Mammary epithelial cell (primary cell): ENCODE measurements at regions of chr15 and their contacts with region 1.

Region 1: DNA sequence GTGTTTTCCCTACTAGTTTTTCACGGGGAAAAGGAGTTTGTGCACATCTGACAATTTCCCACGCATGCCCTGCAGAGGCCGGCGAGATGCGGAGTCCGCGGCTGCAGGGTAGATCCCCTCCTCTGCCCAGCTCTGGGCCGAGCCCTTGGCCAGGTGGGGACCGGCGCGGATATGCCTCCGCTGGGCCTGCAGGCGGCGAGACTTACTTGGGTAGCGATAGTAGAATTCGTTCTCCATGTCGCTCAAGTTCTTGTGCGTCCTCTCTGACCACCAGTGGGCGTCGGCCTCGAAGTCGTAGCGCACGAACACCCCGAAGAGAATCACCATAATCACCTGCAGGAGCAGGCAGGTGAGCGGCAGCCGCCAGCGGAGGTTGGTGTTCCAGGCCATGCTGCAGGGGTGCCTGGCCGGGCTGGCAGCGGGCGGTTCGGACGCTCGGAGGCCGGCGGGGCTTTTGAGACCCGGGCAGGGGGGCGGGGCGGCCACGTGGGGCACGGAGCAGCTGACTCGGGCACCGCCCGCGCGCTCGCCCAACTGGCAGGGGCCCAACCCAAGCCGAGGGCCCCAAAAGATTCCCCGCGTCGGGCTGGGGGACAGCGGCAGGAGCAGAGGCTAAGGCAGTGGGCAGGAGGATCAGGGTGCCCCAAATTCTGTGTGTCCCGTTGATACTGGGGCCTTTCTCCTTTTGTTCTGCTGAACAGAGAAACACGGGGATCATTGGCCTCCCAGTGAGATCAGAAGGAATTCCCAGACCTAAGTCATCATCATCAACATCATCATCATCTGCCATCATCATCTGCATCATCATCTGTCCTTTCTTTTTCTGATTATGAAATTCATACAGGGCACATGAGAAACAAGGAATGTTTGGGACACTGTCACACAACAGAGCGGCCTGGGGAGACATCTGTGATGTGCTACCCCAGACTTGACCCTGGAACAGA is at the start of gene RHCG:
- DNase-seq: peak; percentile 57
- H3K4me3 ChIP-seq: no peak within 1 kb of the TSS
- H3K27ac ChIP-seq: no peak within 1 kb of the TSS
- H3K4me1 ChIP-seq: peaks cover 29% of the 10 kb centered on the region
- H3K27me3 ChIP-seq: no peaks in the 10 kb centered on the region
- CTCF ChIP-seq: peak; percentile 2 to 25
- total RNA-seq, gene RHCG: 0.89 to 2.5 TPM

Region 2: DNA sequence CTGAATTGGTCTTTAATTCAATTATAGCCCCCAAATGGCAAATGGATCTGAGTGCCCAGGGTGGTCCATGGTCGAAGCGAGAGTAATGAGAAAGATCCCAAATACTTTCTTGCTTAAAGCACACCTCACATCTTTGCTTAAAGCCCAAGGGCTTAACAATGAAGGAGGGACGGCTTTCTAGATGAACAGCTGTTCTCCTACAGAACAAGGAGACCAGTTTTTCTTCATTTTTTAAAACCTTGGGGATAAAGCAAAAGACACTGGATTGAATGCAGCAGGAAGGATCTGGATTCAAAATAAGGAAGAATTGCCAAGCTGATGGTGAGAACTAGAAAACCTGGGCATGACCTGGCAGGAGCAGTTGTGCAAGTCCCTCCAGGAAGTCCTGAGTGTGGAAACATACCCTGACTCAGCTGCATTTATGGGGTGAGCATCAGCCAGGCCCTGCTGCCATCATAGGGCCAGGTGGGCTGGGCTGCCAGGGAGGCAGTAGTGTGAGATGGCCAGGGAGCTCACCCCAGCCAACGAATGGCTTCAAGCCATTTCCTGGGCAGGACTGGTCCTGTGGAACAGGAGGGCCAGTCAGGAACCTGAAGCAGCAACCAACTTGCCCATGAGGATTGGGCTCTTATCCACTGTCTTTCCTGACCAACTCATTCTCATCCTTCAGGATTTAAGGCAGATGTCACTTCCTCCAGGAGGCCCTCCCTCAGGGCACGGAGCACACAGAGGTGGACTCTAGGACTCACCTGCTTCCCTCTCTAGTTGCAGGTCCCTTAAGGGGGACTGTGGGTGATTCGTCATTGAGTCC is 18.4 kb after region 1 on chr15:
- CTCF ChIA-PET with region 1: interaction called, 8 read pairs
- dilution Hi-C with region 1: no loop called
- in situ Hi-C with region 1: no loop called
- intact Hi-C with region 1: loop called (anchors 1 kb)
- DNase-seq: peak; percentile 99
- H3K4me3 ChIP-seq: no peak overlapping the region
- H3K27ac ChIP-seq: peak overlapping the region; percentile 91
- H3K4me1 ChIP-seq: peaks cover 39% of the 10 kb centered on the region
- H3K27me3 ChIP-seq: no peaks in the 10 kb centered on the region
- CTCF ChIP-seq: no peak